Aorta (tissue), 5 donors: ENCODE measurements at regions of chr14 and their contacts with region 1.

Region 1: DNA sequence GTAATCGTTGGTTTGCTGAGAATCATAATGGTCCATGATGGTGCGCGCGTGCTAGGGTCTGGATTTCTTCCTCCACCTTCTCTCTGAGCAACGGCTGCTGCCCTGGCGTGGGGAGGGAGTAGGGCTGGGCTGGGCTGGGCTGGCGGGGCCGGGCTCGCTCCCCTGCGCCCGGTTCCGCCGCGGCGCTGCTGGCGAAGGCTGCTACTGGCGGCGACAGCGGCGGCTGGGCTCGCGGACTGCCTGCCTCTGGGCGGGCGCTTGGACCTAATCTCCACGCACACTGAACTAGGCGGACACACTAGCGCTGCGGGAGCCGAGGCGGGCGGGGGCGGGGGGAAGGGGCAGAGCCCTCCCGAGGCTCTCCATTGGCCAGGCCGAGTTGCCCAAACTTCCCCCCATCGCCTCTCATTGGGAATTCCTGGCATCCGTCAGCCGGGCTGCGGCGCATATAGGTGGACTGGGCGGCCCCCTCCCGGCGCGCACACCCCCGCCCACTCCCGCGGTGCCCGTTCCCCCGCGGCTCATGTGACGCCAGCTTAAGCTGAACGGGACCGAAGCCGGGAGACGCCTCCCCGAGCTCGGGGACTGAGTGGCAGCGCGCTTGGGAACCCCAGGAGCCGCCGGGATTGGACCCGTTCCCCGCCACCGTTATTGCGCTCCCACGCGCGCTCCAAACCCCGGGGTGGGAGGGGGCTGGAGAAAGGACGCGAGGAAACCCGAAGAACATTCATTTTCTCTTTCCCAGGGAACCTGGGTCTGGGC is at the start of gene ACTN1:
- DNase-seq: peak; percentile 97
- ATAC-seq: peak; percentile 86
- H3K4me3 ChIP-seq: peak within 1 kb of the TSS; percentile 76 to 95
- H3K27ac ChIP-seq: peak within 1 kb of the TSS; percentile 97 to 99
- H3K4me1 ChIP-seq: peaks cover 2 to 8% of the 10 kb centered on the region in 2 donors
- H3K27me3 ChIP-seq: no peaks in the 10 kb centered on the region
- total RNA-seq, gene ACTN1: 883 to 1,590 TPM

Region 2: DNA sequence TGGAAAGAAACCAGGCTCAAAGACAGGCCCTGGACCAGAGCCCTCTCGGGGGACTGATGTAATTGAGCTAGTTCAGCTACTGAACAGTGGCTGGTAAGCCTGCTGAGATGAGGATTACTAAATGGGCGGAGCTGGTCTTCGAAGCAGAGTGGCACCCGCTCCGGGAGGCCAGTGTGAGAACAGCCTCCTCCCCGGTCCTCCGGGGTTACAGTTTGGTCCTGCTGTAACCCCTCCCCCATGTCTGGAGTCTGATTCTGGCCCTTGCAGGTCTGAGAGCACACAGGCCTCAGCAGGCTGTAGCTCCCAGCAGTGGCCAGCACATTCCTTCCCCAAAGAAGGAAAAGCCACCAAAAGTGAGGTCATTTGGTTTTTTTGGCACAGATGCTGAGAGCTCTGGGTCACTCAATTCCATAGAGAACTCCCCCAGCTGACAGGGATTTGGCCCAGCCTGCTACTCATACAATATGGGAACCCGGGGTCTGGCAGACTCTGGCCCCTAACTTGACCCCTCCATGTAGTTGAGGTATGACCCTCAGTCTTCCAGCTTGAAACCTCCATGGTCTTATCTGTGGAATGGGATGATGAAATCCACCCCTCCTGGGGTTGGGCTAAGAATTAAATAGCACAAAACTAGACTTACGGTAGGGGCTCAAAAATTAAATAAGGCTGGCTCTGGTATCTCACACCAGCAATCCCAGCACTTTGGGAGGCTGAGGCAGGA is 39.1 kb before region 1 on chr14:
- intact Hi-C with region 1: loop called in 1 of 2 experiments (anchors 5 kb)
- DNase-seq: peak; percentile 92 to 93
- ATAC-seq: peak; percentile 89
- H3K4me3 ChIP-seq: no peak overlapping the region
- H3K27ac ChIP-seq: peak overlapping the region; percentile 95 to 97
- H3K4me1 ChIP-seq: peaks cover 4 to 7% of the 10 kb centered on the region in 2 donors
- H3K27me3 ChIP-seq: no peaks in the 10 kb centered on the region

Region 3: DNA sequence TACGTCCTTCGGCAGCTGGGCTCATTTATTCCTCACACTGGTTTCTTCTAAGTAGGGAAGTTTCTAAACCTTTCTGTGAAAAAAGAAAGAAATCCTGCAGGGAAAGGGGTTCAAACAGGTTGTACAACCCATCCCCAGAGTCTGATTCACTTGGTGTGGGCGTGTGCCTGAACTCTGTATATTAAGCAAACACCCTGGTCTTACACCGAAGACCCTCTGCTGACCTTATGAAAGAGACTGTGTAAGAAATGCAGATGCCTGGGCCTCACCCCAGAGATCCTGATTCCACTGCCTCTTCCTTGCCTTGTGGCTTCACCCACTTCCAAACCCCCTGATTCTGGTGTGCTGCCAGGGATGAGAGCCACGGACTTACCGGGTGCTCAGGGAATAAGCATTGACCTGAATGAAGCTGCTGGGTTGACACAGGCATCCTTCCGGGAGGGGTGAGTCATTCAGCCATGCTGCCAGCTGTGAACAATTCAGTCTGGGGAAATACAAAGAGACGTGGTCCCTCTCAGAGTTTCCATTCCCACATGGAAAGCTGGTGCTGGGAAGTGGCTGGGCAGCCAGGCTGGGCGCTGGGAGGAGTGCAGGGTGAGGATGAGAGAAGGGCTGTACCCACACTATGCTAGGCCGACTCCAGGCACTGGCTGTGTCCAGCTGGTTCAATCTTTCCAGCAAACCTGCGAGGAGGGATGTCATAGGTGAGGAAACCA is 26.4 kb after region 1 on chr14:
- intact Hi-C with region 1: loop called in 1 of 2 experiments (anchors 2 kb)
- DNase-seq: peak; percentile 91 to 94
- ATAC-seq: peak; percentile 90
- H3K4me3 ChIP-seq: no peak overlapping the region
- H3K27ac ChIP-seq: peak overlapping the region; percentile 32 to 69
- H3K4me1 ChIP-seq: peaks cover 0 to 2% of the 10 kb centered on the region in 2 donors
- H3K27me3 ChIP-seq: no peaks in the 10 kb centered on the region

Region 4: DNA sequence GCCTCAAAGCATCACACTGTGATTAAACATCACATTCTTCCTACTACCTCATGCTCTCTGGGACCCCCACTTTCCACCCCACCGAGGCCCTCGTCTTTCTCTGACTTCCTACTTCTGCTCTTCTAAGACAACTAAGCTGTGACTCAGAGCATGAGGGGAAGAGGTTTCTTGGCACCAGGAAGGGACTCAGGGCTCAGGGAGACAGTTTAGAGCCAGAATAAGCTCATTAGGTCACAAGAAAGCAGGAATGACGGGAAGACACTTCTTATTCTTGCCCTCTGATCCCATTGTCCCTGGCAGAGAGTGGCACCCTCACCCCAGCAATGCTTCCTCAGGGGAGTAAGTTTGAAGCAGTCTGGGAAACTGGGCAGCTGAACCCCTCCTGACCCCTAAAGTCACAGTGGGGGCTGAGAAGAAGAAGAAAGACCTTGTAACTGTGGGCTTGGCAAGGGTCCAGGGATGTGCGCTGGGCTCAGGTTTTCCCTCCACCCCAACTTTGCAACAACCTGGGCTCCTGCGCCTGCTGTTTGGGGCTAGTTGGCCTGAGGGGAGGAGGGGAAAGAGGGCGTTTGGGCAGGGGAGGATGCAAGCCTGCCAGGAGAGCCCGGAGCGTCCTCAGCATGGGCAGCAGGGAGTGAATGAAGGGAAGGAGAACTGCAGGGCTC is 64.5 kb after region 1 on chr14:
- intact Hi-C with region 1: loop called (anchors 1 to 2 kb)
- DNase-seq: peak; percentile 73 to 78
- ATAC-seq: peak; percentile 56
- H3K4me3 ChIP-seq: no peak overlapping the region
- H3K27ac ChIP-seq: peak overlapping the region; percentile 69 to 77
- H3K4me1 ChIP-seq: peaks cover 2 to 15% of the 10 kb centered on the region in 2 donors
- H3K27me3 ChIP-seq: no peaks in the 10 kb centered on the region

Region 5: DNA sequence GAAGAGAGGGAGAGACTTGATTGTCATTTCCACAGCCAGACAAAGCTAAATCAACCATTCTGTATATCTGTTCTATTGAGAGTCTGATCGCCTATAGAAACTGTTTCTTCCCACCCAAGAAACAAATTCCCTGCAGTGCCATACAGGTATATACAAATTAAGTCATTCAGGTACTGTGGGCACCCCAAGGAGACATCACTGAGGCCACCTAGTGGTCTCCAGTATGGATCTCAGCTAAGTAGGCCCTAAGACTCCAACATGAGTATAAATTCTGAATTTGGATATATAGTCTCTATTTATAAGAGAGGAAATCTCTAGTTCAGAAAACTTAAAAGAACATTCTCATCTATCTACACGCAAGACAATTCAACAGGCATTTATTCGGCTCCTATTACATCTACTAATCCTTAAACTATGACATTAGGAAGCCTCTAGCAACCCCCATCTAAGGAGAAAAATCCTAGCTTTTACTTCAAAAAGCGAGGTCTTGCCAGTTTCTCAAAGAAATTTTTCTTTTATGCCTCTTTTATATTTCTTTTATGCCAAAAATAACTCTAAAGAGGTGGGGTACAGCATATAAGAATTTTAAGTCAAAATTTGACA is 111.1 kb after region 1 on chr14:
- intact Hi-C with region 1: loop called in 1 of 2 experiments (anchors 5 kb)
- DNase-seq: no peak
- ATAC-seq: peak; percentile 63
- H3K4me3 ChIP-seq: no peak overlapping the region
- H3K27ac ChIP-seq: peak overlapping the region in 1 of 2 donors; percentile 28
- H3K4me1 ChIP-seq: peaks cover 3 to 4% of the 10 kb centered on the region in 2 donors
- H3K27me3 ChIP-seq: no peaks in the 10 kb centered on the region